ENCODE measurements at regions of chr1 and their contacts with region 1.

Region 1: GRCh38 chr1:115138968-115139367 is 49.7 kb upstream of the TSPAN2 start:
- DNase-seq: peak; percentile 87
- H3K4me3 ChIP-seq: no peak overlapping the region
- CTCF ChIP-seq: peak; percentile 88

Region 2: GRCh38 chr1:114997510-114998289 is 141.3 kb before region 1 on chr1:
- CTCF ChIA-PET with region 1: no interaction called
- POLR2A ChIA-PET with region 1: no interaction called
- DNase-seq: no peak
- H3K4me3 ChIP-seq: no peak overlapping the region
- CTCF ChIP-seq: no peak

Region 3: GRCh38 chr1:115036814-115037507 is 102.0 kb before region 1 on chr1:
- CTCF ChIA-PET with region 1: no interaction called
- POLR2A ChIA-PET with region 1: no interaction called
- DNase-seq: no peak
- H3K4me3 ChIP-seq: no peak overlapping the region
- CTCF ChIP-seq: no peak

Region 4: DNA sequence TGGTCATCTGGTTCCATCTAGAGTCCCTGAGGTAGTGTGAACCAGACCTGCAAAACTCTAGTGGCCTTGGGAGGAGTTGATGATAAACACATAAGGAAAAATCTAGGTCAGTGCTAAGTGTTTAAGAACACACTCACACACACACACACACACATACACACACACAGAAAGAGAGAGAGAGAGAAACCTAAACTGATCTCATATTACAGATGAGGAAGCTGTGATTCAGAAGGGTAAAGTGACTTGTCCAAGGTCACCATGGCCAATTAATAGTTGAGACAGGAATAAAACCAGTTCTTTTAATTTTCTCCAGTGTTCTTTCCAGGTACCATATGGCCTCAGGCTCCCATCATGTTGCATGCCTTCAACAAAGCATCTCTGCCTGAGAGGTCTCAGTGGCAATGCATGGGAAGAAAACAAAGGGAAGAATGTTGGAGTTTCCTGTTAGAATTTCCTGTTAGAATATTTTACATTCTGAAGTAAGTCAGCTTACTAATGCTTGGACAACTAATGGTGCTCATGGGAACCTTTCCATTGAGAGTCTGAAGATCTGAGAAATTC is 27.6 kb after region 1 on chr1:
- CTCF ChIA-PET with region 1: interaction called, 62 read pairs
- POLR2A ChIA-PET with region 1: interaction called, 5 read pairs
- DNase-seq: peak; percentile 70
- H3K4me3 ChIP-seq: no peak overlapping the region
- CTCF ChIP-seq: no peak

Region 5: GRCh38 chr1:115239148-115239820 is 100.3 kb after region 1 on chr1:
- CTCF ChIA-PET with region 1: interaction called, 28 read pairs
- POLR2A ChIA-PET with region 1: no interaction called
- DNase-seq: peak; percentile 90
- H3K4me3 ChIP-seq: peak overlapping the region; percentile 24
- CTCF ChIP-seq: no peak

Region 6: DNA sequence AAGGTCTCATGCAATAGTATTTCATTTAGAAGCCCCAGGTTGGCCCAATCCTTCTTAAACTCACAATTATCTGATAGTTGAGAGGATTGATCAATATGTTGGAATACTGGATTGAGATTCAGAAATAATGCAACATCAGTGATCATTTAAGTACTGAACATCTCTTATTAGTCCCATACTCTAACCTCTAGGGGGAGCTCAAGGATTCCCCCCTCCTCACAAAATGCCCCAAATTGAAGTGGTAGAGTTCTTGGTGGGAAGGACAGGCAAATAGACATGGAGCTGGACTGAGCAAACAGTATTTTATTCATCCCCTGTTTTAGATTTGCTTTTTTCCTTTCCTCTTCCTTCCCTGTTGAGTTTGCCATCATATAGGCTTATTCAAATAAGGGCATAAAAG is 136.2 kb after region 1 on chr1:
- CTCF ChIA-PET with region 1: interaction called, 199 read pairs
- POLR2A ChIA-PET with region 1: interaction called, 4 read pairs
- DNase-seq: no peak
- H3K4me3 ChIP-seq: no peak overlapping the region
- CTCF ChIP-seq: peak; percentile 5

Region 7: DNA sequence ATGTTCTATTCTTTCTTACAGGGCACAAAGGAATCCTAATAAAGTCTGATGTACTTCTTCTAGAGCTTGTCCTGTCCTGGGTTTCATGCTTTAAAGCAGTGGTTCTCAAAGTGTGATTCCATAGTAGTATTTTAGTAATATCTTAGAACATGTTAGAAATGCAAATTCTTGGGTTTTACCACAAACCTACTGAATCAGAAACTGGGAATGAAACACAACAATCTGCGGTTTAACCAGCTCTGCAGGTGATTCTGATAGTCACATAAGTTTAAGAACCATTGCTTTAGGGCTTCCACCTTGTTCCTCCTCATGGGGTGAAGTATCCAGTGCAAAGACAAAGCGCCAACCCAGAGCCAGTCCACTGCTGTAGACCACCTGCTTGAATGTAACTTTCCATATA is 158.0 kb after region 1 on chr1:
- CTCF ChIA-PET with region 1: interaction called, 59 read pairs
- POLR2A ChIA-PET with region 1: interaction called, 4 read pairs
- DNase-seq: no peak
- H3K4me3 ChIP-seq: no peak overlapping the region
- CTCF ChIP-seq: no peak

Region 8: GRCh38 chr1:115323376-115324004 is 184.5 kb after region 1 on chr1:
- CTCF ChIA-PET with region 1: interaction called, 41 read pairs
- POLR2A ChIA-PET with region 1: interaction called, 4 read pairs
- DNase-seq: no peak
- H3K4me3 ChIP-seq: no peak overlapping the region
- CTCF ChIP-seq: no peak

Region 9: DNA sequence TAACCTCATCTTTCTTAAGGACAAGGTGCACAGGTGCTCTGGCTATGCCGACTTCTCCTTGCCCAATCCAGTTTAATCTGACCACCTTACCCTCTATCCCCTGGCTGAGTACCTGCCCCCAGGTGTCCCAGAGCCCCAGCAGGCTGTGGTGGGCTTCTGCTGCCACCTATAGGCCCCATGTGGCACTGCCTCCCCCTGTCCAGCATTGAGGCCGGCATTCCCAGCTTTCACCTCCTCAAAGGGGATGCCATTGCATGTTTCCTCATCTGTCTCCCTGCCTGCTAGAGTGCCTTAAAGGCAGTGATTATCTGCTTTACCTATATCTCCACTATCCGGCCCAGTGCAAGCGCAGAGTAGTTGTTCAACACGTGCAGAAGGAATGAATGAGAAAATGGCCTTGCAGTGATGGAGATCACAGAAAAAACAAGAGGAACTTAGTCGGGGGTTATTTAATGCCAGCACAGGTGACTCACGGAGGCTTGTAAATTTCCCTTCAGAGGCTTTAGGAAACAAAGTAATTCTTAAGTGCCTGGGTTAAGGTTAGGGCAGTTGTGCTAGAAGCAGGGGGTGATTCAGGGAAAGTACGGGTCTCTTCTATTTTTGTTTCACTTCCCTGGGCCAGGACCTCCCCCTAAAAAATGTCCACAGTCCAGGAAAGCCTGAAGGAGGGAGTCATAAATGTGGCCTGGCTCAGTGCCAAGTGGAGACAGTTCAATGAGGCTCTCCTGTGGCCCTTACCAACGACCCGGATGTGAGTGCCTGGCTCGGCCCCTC is 330.9 kb after region 1 on chr1:
- CTCF ChIA-PET with region 1: interaction called, 144 read pairs
- POLR2A ChIA-PET with region 1: no interaction called
- DNase-seq: no peak
- H3K4me3 ChIP-seq: no peak overlapping the region
- CTCF ChIP-seq: peak; percentile 98